SK-N-SH (cell line): ENCODE measurements at regions of chr17 and their contacts with region 1.

Region 1: DNA sequence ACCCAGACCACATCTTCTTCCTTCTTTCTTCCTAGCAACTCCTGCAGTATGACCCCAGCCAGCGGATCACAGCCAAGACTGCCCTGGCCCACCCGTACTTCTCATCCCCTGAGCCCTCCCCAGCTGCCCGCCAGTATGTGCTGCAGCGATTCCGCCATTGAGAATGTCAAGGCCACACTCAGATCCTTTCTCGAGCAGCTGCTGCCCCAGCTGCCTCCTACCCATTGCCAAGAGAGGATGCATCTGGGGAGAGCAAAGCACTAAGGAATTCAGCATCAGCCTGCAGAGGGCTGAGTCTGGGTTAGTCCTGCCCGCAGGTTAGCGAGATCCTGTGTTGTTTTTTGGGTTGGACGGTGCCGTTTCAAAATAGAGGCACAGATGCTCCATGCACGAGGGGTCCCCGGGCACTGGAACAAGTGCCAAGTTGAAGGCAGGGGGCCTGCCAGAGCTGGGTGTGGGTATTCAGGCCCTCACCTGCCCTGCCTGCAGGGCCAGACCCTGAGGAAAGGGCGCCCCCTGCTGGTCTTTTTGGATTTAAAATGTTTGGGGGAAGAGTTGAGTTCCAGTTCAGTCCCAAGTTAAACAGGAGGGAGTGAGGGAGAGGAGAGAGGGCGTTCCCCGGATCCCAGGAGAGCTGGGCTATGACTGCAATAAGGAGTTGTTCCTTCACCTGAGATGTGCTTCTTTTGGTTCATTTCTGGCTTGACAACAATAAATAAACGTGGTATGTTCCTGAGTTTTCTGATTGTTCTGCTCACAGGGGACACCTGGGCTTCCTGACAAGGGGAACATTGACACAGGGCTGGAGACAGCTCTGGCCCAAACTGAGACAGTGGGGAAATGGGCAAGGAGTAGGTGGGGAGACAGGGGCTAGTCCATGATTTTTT is 4.9 kb downstream of the CDK3 start:
- DNase-seq: peak; percentile 92
- H3K4me3 ChIP-seq: no peak overlapping the region; a peak in 1 of 4 replicates
- H3K27ac ChIP-seq: peak overlapping the region in 1 of 2 experiments; percentile 38; a peak in 1 of 4 replicates
- H3K4me1 ChIP-seq: peaks cover 0 to 10% of the 10 kb centered on the region in 2 experiments; a peak in 2 of 4 replicates
- H3K27me3 ChIP-seq: no peaks in the 10 kb centered on the region
- CTCF ChIP-seq: peak; percentile 94
- EP300 ChIP-seq: no peak
- RAD21 ChIP-seq: peak; percentile 83

Region 2: DNA sequence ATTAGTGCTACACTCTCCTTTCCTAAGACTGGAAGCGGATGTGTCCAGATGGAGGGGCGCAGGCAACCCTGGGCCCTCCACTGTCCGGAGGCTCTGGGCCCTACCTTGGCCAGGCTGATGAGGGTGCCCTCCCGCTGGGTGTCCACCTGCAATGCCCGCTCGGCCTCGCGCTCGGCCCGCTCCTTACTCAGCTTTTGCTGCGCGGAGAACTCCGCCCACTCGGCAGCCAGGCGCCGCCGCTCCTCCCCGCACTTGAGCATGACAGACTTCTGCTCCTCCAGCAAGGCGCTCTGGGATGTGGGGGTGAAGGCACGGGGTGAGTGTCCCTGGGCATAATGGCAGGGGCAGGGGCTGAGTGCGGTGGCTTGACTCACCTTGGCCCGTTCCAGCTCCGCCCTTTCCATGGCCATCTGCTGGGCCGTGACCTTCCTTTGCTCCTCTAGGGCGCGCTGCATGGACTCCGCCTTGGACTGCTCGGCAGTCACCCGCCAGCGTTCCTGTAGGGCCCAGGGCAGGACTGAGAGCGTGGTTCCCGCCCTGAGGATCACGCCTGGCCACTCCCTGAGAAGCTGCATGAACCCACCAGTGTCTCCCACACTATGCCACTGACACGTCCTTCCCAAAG is 90.8 kb before region 1 on chr17:
- CTCF ChIA-PET with region 1: interaction called, 27 read pairs
- POLR2A ChIA-PET with region 1: no interaction called
- DNase-seq: no peak
- H3K4me3 ChIP-seq: no peak overlapping the region
- H3K27ac ChIP-seq: no peak overlapping the region
- H3K4me1 ChIP-seq: peaks cover 0 to 10% of the 10 kb centered on the region in 2 experiments; a peak in 1 of 4 replicates
- H3K27me3 ChIP-seq: no peaks in the 10 kb centered on the region
- CTCF ChIP-seq: no peak
- EP300 ChIP-seq: no peak
- RAD21 ChIP-seq: no peak

Region 3: GRCh38 chr17:75979705-75980187 is 25.8 kb before region 1 on chr17:
- CTCF ChIA-PET with region 1: interaction called, 21 read pairs
- POLR2A ChIA-PET with region 1: no interaction called
- DNase-seq: no peak
- H3K4me3 ChIP-seq: peak overlapping the region; percentile 68 to 87
- H3K27ac ChIP-seq: peak overlapping the region; percentile 96 to 98
- H3K4me1 ChIP-seq: peaks cover 0 to 20% of the 10 kb centered on the region in 2 experiments; a peak in 3 of 4 replicates
- H3K27me3 ChIP-seq: no peaks in the 10 kb centered on the region
- CTCF ChIP-seq: no peak
- EP300 ChIP-seq: no peak
- RAD21 ChIP-seq: no peak

Region 4: DNA sequence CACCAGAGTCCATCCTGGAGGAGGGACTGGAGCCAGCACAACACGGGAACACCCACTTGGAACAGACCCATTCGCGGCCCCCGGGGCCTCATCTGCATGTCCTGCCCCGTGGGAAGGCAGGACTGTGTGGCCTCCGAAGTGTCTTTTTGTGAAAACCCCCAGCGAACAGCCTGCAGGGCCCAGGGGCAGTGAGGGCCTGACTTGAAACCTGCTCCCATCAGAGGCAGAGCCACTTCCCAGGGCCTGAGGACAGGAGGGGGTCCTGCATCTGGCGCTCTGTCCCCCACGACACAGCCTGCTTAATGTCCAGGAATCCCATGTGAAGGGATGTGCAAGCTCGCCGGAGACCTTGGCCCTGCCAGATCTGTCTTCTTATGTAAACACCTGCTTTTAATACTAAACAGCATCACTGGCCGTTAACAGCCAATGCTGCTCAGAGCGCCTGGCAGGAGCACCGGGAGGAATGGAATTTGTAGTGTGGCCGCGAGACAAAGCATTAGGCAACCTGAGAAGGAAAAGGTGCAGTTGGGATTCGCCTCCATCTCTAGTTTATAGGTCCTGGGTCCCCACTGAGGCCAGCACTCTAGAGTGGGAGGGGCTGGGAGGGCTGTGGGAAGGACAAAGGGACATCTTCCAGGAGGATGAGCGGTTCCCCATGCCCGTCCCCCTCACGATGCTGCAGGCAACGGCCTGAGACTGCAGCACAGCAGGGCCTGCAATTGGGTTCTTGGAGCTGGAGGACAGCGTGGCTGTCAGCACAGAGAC is 31.2 kb after region 1 on chr17:
- CTCF ChIA-PET with region 1: interaction called, 12 read pairs
- POLR2A ChIA-PET with region 1: no interaction called
- DNase-seq: peak; percentile 89
- H3K4me3 ChIP-seq: no peak overlapping the region
- H3K27ac ChIP-seq: peak overlapping the region in 1 of 2 experiments; percentile 47; a peak in 2 of 4 replicates
- H3K4me1 ChIP-seq: peaks cover 0 to 12% of the 10 kb centered on the region in 2 experiments; a peak in 1 of 4 replicates
- H3K27me3 ChIP-seq: no peaks in the 10 kb centered on the region
- CTCF ChIP-seq: no peak
- EP300 ChIP-seq: peak in 1 of 2 experiments; percentile 23; a peak in 1 of 4 replicates
- RAD21 ChIP-seq: no peak